ENCODE measurements at regions of chr12 and their contacts with region 1.

Region 1: DNA sequence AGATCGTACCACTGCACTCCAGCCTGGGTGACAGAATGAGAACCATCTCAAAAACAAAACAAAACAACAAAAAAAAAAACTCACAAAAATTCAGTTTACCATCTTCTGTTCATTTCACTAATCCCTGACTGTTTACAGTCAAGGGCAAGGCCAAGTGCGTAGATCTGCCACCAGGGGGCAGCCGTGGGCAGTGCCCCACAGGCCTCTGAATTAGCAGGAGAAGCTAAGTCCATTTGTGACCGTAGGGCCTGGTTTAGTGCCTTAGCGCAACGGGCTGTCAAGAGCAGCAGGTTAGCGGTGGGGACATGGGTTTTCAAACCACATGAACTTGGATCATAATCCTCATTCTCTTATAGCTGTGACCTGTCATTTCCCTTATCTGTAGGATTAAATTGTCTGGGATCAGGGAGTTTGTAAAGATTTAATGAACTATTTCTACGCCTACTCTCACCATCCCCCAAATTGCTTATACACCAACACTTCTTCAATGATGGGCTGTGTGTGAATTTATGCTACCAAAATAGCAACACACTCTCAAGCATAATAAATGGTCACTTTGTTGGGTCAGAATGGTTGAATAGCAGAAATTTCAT is 49.0 kb downstream of the KCTD10 start:
- H3K4me3 Mint-ChIP-seq: no peak overlapping the region
- H3K27ac Mint-ChIP-seq: no peak overlapping the region
- H3K4me1 Mint-ChIP-seq: peaks cover 11% of the 10 kb centered on the region
- H3K27me3 Mint-ChIP-seq: peaks cover 10% of the 10 kb centered on the region

Region 2: DNA sequence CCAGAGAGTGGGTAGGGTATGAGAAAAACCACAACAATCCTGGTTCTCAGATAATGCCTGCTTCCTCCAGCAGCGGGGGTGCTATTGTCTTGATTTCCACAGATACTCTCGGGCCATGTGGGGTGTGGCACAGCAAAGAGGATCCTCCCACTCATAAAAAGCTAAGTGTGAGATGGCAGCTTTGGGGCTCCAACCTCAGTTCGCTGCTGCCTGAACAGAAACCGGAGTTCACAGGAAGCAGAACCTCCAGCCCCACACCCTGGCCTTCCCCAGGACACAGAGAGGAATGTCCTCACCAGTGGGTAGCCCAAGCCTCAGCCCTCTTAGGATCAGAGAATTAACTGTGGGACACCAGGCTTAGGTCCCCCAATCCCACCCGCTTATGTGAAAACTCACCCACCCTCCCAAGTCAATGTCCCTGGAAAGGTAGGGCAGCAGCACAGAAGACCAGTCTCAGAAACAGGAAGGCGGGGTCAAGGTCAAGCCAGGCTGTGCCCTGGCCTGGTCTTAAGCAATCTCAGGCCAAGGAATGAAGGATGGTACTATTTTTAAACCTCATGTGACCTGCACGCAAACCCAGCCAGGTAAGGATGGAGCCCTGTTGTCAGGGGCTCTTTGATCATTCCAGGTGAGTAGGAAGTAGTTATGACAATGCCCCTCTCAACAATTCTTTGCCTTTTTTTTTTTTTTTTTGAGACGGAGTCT is 40.0 kb after region 1 on chr12:
- intact Hi-C with region 1: loop called (anchors 2 kb)
- H3K4me3 Mint-ChIP-seq: peak overlapping the region; percentile 32
- H3K27ac Mint-ChIP-seq: peak overlapping the region; percentile 88
- H3K4me1 Mint-ChIP-seq: peaks cover 80% of the 10 kb centered on the region
- H3K27me3 Mint-ChIP-seq: no peaks in the 10 kb centered on the region

Region 3: GRCh38 chr12:109477185-109477962 is 49.2 kb after region 1 on chr12 and contains the starts of genes KCTD10 and UBE3B:
- intact Hi-C with region 1: loop called (anchors 2 kb)
- H3K4me3 Mint-ChIP-seq: peak within 1 kb of the TSS; percentile 96
- H3K27ac Mint-ChIP-seq: peak within 1 kb of the TSS; percentile 99
- H3K4me1 Mint-ChIP-seq: peaks cover 44% of the 10 kb centered on the region
- H3K27me3 Mint-ChIP-seq: no peaks in the 10 kb centered on the region

Region 4: GRCh38 chr12:109775172-109775881 is 347.2 kb after region 1 on chr12:
- intact Hi-C with region 1: loop called (anchors 2 kb)
- H3K4me3 Mint-ChIP-seq: no peak overlapping the region
- H3K27ac Mint-ChIP-seq: no peak overlapping the region
- H3K4me1 Mint-ChIP-seq: peaks cover 18% of the 10 kb centered on the region
- H3K27me3 Mint-ChIP-seq: peaks cover 20% of the 10 kb centered on the region